Tibial artery (tissue), 4 donors: ENCODE measurements at regions of chr2 and their contacts with region 1.

Region 1: GRCh38 chr2:218839888-218840287 is 8.3 kb upstream of the PRKAG3 start:
- DNase-seq: no peak
- H3K4me3 ChIP-seq: no peak overlapping the region
- H3K27ac ChIP-seq: no peak overlapping the region
- H3K4me1 ChIP-seq: no peaks in the 10 kb centered on the region
- H3K27me3 ChIP-seq: peaks cover 0 to 3% of the 10 kb centered on the region in 2 donors
- CTCF ChIP-seq: no peak

Region 2: GRCh38 chr2:217899231-217900009 is 940.5 kb before region 1 on chr2:
- intact Hi-C with region 1: no loop called
- DNase-seq: peak; percentile 84 to 95
- H3K4me3 ChIP-seq: peak overlapping the region; percentile 44 to 53
- H3K27ac ChIP-seq: peak overlapping the region; percentile 95 to 98
- H3K4me1 ChIP-seq: peaks cover 0 to 99% (median 87%) of the 10 kb centered on the region in 4 donors
- H3K27me3 ChIP-seq: no peaks in the 10 kb centered on the region
- CTCF ChIP-seq: peak; percentile 79 to 85

Region 3: GRCh38 chr2:218717262-218717661 is 122.6 kb before region 1 on chr2:
- intact Hi-C with region 1: loop called (anchors 5 kb)
- DNase-seq: no peak
- H3K4me3 ChIP-seq: no peak overlapping the region
- H3K27ac ChIP-seq: no peak overlapping the region
- H3K4me1 ChIP-seq: peaks cover 0 to 2% (median under 1%) of the 10 kb centered on the region in 4 donors
- H3K27me3 ChIP-seq: no peaks in the 10 kb centered on the region
- CTCF ChIP-seq: no peak

Region 4: GRCh38 chr2:218773881-218774280 is 66.0 kb before region 1 on chr2:
- intact Hi-C with region 1: no loop called
- DNase-seq: no peak
- H3K4me3 ChIP-seq: no peak overlapping the region
- H3K27ac ChIP-seq: no peak overlapping the region
- H3K4me1 ChIP-seq: no peaks in the 10 kb centered on the region
- H3K27me3 ChIP-seq: no peaks in the 10 kb centered on the region
- CTCF ChIP-seq: no peak

Region 5: GRCh38 chr2:219028996-219029828 is 189.3 kb after region 1 on chr2:
- intact Hi-C with region 1: no loop called
- DNase-seq: no peak
- H3K4me3 ChIP-seq: no peak overlapping the region
- H3K27ac ChIP-seq: no peak overlapping the region
- H3K4me1 ChIP-seq: no peaks in the 10 kb centered on the region
- H3K27me3 ChIP-seq: peaks cover 0 to 68% of the 10 kb centered on the region in 2 donors
- CTCF ChIP-seq: no peak